Posterior cingulate gyrus (tissue), 11 donors: ENCODE measurements at regions of chrX and their contacts with region 1.

Region 1: GRCh38 chrX:23782863-23783568 is at the start of gene SAT1:
- DNase-seq: peak; percentile 88 to 99 (median 94)

Region 2: GRCh38 chrX:23667239-23668177 is 115.5 kb before region 1 on chrX and contains the start of gene PRDX4:
- intact Hi-C with region 1: loop called (anchors 2 kb)
- DNase-seq: peak; percentile 71 to 98 (median 83)